ENCODE measurements at regions of chrX and their contacts with region 1.

Region 1: DNA sequence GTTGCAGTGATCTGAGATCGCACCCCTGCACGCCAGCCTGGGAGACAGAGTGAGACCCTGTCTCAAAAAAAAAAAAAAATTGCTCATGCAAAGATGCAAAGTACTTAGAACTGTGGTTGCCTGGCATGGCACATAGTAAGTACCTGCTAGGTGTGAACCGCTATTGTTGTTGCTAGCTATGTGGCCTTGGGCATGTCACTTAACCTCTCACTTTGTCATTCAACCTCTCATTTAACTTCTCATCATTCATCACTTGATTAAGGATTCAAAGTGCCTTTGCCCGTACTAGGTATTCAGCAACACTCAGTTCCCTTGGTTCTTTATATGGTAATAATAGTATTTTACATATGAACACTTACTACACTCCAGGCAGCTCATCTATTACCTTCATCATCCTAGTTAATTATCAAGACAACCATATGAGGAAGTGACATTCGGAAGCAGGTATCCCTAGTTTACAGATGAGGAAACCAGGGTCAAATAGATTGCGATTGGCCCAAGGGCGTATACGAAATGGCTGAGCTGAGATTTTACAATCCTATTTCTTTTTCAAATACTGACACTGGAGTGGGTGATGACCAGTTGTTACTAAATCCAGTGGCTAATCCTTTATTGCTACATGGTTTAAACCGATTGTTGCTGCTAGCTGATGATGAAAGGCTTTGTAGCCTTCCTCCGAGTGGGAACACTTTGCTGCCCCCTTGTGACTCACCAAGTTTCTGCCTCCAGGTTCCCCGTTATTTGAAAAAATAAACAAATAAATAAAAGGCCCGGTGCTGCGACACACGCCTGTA is 28.8 kb upstream of the SOWAHD start:
- DNase-seq: peak; percentile 77
- ATAC-seq: peak; percentile 70
- H3K4me3 Mint-ChIP-seq: no peak overlapping the region
- H3K27ac Mint-ChIP-seq: no peak overlapping the region
- H3K4me1 Mint-ChIP-seq: peaks cover 5% of the 10 kb centered on the region
- H3K27me3 Mint-ChIP-seq: no peaks in the 10 kb centered on the region
- CTCF ChIP-seq: peak; percentile 51

Region 2: DNA sequence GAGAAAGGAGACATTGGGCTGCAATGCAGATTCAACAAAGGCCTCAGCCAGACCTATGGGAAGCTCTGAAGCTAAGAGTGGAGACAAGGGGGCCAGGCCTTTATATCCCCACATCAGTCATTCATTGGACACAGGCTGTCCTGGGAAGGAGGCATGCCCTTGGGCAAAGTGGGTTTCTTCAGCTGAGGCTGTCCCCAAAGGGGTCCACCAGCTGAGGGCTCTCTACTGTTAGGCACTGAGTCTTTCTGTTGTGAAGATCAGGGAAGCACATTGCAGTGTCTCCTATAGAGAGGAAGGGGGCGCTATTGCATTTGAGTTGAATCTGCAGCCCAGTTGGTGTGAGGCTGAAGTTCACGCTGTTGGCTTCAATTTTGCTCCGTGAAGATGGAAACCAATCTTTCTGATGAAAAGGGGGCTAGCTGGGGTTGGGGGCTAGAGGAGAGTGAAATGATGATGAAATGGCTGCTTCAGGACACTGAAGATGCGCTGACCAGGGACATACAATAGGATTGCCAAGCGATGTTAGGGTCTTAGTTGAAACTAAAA is 213.4 kb before region 1 on chrX:
- CTCF ChIA-PET with region 1: interaction called, 27 read pairs
- POLR2A ChIA-PET with region 1: interaction called, 3 read pairs
- intact Hi-C with region 1: loop called (anchors 10 kb)
- DNase-seq: peak; percentile 46
- ATAC-seq: peak; percentile 97
- H3K4me3 Mint-ChIP-seq: no peak overlapping the region
- H3K27ac Mint-ChIP-seq: no peak overlapping the region
- H3K4me1 Mint-ChIP-seq: peaks cover 2% of the 10 kb centered on the region
- H3K27me3 Mint-ChIP-seq: no peaks in the 10 kb centered on the region
- CTCF ChIP-seq: peak; percentile 64

Region 3: GRCh38 chrX:119661486-119661885 is 68.1 kb before region 1 on chrX:
- CTCF ChIA-PET with region 1: interaction called, 14 read pairs
- POLR2A ChIA-PET with region 1: no interaction called
- intact Hi-C with region 1: no loop called
- DNase-seq: no peak
- ATAC-seq: no peak
- H3K4me3 Mint-ChIP-seq: no peak overlapping the region
- H3K27ac Mint-ChIP-seq: no peak overlapping the region
- H3K4me1 Mint-ChIP-seq: peaks cover 37% of the 10 kb centered on the region
- H3K27me3 Mint-ChIP-seq: no peaks in the 10 kb centered on the region
- CTCF ChIP-seq: no peak

Region 4: DNA sequence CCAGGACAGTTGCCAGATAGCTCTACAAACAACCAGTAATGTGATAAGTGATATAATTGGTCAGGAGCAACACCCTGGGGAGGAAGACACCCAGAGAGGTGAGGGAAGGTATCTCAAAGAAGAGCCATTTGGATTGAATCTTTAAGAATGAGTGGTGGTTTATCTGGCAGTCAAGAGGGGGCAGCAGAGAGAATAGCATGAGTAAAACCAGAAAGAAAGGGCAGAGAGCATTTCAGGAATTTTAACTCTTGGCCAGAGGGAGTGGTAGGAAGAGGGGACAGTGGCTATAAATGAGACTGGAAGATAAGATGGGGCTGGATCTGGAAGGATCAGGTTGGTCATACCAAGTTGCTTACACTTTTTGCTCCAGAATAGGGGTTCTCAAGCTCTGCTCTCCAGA is 30.8 kb before region 1 on chrX:
- CTCF ChIA-PET with region 1: interaction called, 11 read pairs
- POLR2A ChIA-PET with region 1: interaction called, 6 read pairs
- intact Hi-C with region 1: no loop called
- DNase-seq: no peak
- ATAC-seq: peak; percentile 70
- H3K4me3 Mint-ChIP-seq: no peak overlapping the region
- H3K27ac Mint-ChIP-seq: no peak overlapping the region
- H3K4me1 Mint-ChIP-seq: peaks cover 6% of the 10 kb centered on the region
- H3K27me3 Mint-ChIP-seq: no peaks in the 10 kb centered on the region
- CTCF ChIP-seq: peak; percentile 59

Region 5: GRCh38 chrX:119753571-119754257 is 24.1 kb after region 1 on chrX:
- CTCF ChIA-PET with region 1: interaction called, 12 read pairs
- POLR2A ChIA-PET with region 1: interaction called, 3 read pairs
- intact Hi-C with region 1: no loop called
- DNase-seq: peak; percentile 69
- ATAC-seq: peak; percentile 62
- H3K4me3 Mint-ChIP-seq: no peak overlapping the region
- H3K27ac Mint-ChIP-seq: peak overlapping the region; percentile 94
- H3K4me1 Mint-ChIP-seq: peaks cover 51% of the 10 kb centered on the region
- H3K27me3 Mint-ChIP-seq: no peaks in the 10 kb centered on the region
- CTCF ChIP-seq: peak; percentile 62

Region 6: GRCh38 chrX:119916310-119916709 is 186.7 kb after region 1 on chrX:
- CTCF ChIA-PET with region 1: no interaction called
- POLR2A ChIA-PET with region 1: no interaction called
- intact Hi-C with region 1: no loop called
- DNase-seq: no peak
- ATAC-seq: no peak
- H3K4me3 Mint-ChIP-seq: no peak overlapping the region
- H3K27ac Mint-ChIP-seq: no peak overlapping the region
- H3K4me1 Mint-ChIP-seq: no peaks in the 10 kb centered on the region
- H3K27me3 Mint-ChIP-seq: no peaks in the 10 kb centered on the region
- CTCF ChIP-seq: no peak